ENCODE measurements at regions of chr11 and their contacts with region 1.

Region 1: GRCh38 chr11:34234086-34234740 is 123.6 kb downstream of the ABTB2 start:
- DNase-seq: peak; percentile 80
- H3K4me3 Mint-ChIP-seq: no peak overlapping the region
- H3K27ac Mint-ChIP-seq: peak overlapping the region; percentile 62
- H3K4me1 Mint-ChIP-seq: peaks cover 48% of the 10 kb centered on the region
- H3K27me3 Mint-ChIP-seq: peaks cover 13% of the 10 kb centered on the region

Region 2: GRCh38 chr11:34051349-34052035 is 182.7 kb before region 1 on chr11 and contains the start of gene CAPRIN1:
- CTCF ChIA-PET with region 1: no interaction called
- POLR2A ChIA-PET with region 1: no interaction called
- DNase-seq: peak; percentile 85
- H3K4me3 Mint-ChIP-seq: peak within 1 kb of the TSS; percentile 95
- H3K27ac Mint-ChIP-seq: peak within 1 kb of the TSS; percentile 89
- H3K4me1 Mint-ChIP-seq: peaks cover 24% of the 10 kb centered on the region
- H3K27me3 Mint-ChIP-seq: peaks cover 2% of the 10 kb centered on the region
- total RNA-seq, gene CAPRIN1: 191 to 200 TPM

Region 3: GRCh38 chr11:34192481-34193401 is 41.5 kb before region 1 on chr11:
- CTCF ChIA-PET with region 1: no interaction called
- POLR2A ChIA-PET with region 1: no interaction called
- DNase-seq: peak; percentile 33
- H3K4me3 Mint-ChIP-seq: no peak overlapping the region
- H3K27ac Mint-ChIP-seq: no peak overlapping the region
- H3K4me1 Mint-ChIP-seq: peaks cover 20% of the 10 kb centered on the region
- H3K27me3 Mint-ChIP-seq: peaks cover 2% of the 10 kb centered on the region

Region 4: DNA sequence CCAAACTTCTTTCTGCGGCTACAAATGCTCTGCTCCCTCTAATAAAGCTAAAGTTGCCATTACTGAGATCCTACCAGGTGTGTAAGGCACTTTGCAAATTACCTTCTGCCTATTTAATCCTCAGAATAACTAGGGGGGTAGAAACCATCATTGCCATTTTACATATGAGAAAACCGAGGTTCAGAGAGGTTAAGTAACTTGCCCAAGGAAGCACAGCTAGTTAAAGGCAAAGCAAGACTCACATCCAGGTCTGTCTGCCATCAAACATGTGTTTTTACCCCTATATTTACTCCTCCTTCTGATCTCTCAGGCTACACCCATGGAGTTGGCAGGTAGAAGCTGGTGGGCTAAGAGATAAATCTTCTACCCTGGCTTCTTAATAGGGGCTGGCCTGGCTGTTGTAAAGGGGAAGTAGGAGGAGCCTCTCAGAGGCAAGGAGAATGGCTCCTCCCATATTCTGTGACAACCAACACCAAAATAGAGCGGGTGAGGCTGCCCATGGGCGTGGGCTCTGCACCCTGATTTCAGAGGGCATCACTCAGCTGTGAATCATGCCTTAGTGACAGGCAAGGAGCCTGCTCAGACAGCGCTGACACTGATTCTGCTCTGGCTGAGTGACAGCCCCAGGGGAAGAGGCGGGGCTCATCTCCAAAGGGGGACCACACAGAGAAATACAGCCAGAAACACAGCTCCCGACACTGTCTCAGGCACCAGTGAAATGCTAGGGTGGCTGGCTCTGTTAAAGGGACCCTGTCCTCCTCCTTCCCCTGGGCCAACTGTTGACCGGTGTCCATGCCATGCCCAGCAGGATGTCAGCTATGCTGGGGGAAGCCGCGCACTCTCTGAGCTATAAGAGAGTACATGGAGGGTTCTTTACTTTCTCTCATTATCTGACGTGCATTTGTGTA is 16.8 kb after region 1 on chr11:
- CTCF ChIA-PET with region 1: interaction called, 14 read pairs
- POLR2A ChIA-PET with region 1: interaction called, 69 read pairs
- DNase-seq: peak; percentile 82
- H3K4me3 Mint-ChIP-seq: peak overlapping the region; percentile 9
- H3K27ac Mint-ChIP-seq: peak overlapping the region; percentile 33
- H3K4me1 Mint-ChIP-seq: peaks cover 58% of the 10 kb centered on the region
- H3K27me3 Mint-ChIP-seq: peaks cover 14% of the 10 kb centered on the region

Region 5: GRCh38 chr11:34263440-34264172 is 29.4 kb after region 1 on chr11:
- CTCF ChIA-PET with region 1: no interaction called
- POLR2A ChIA-PET with region 1: no interaction called
- DNase-seq: no peak
- H3K4me3 Mint-ChIP-seq: no peak overlapping the region
- H3K27ac Mint-ChIP-seq: no peak overlapping the region
- H3K4me1 Mint-ChIP-seq: peaks cover 2% of the 10 kb centered on the region
- H3K27me3 Mint-ChIP-seq: peaks cover 1% of the 10 kb centered on the region

Region 6: DNA sequence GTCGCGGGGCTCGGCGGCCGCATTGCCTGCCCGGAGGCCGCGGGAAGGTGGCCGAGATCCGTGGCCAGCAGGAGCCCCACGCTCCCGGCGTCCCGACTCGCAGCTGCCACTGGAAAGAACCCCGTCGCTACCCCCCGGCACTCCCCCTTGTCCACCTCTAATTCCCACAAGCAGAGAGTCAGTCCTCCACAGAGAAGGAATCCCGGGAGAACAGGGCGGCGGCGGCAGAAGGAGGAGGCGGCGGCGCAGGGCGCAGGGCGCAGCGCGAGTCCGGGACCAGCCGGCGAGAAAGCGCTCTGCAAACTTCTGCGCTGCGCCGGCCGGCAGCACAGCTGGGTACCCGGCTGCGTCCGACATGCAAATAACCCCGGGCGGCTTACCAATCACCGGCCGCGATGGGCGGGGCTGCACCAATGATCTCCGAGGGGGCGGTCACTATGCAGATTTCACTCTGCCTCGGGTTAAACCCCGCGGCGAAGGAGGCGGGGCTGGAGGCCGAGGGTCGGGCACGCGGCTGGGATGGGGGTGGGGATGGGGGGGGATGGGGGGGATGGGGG is 123.6 kb after region 1 on chr11 and contains the start of gene ABTB2:
- CTCF ChIA-PET with region 1: interaction called, 10 read pairs
- POLR2A ChIA-PET with region 1: interaction called, 9 read pairs
- DNase-seq: peak; percentile 98
- H3K4me3 Mint-ChIP-seq: peak within 1 kb of the TSS; percentile 74
- H3K27ac Mint-ChIP-seq: peak within 1 kb of the TSS; percentile 74
- H3K4me1 Mint-ChIP-seq: peaks cover 29% of the 10 kb centered on the region
- H3K27me3 Mint-ChIP-seq: peaks cover 46% of the 10 kb centered on the region
- total RNA-seq, gene ABTB2: 2.3 to 2.7 TPM